ENCODE measurements at regions of chr1 and their contacts with region 1.

Region 1: DNA sequence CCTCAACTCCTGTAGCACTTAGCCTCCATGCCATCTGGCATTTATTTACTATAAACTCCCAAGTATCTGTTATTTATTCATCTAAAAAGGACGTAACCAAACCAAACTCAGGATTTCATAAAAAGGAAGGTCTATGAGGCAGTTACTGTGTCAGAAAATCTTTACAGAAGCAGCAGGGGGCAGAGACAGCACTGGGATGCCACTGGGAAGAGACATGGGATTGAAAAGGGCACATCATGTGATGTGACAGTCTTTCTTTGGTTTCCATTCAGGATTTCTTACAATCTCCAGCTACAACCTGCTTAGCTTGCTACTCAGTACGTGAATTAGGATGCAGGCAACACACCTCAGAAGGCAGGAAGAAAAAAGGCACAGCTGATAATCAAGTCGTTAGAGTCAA is 31.2 kb downstream of the SPRTN start:
- DNase-seq: peak in 1 of 10 donors; percentile 24
- H3K4me3 ChIP-seq: no peak overlapping the region
- H3K27ac ChIP-seq: peak overlapping the region in 25 of 59 donors; percentile 1 to 72 (median 43)
- H3K27me3 ChIP-seq: no peaks in the 10 kb centered on the region
- CTCF ChIP-seq: peak in 52 of 56 donors; percentile 1 to 77 (median 50)

Region 2: DNA sequence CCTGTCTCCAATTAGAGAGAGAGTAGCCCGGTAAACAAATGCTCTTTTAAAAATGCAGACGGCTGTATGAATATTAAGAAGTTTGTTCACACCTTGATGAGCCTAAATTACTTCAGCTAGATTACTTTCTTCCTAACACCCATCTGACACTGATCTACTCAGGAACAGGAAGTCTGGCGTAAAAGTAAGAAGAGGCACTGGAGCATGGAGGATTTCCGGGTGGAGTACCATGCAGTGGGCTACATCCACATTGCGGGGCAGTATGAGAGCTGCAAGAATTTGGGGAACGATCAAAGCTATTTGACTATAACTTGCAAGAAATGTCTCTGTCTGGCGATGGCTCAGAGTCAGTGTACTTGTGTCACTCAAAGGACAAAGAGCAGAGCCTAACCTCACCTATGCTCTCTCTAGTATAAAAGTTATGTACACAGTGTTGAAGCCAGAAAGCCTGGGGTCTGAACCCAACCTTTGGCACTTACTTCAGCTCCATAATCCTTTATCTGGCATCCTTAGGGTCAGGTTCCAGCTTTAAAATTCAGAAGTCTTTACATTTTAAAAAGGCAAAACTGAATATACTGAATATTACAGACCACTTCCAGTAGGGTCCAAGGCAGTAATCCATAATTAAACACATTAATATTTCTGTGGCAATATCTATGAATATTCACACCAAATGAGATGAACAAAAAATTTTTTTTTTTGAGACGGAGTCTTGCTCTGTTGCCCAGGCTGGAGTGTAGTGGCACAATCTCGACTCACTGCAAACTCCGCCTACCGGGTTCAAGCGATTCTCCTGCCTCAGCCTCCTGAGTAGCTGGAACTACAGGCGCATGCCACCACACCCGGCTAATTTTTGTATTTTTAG is 136.2 kb before region 1 on chr1:
- intact Hi-C with region 1: no loop called
- DNase-seq: no peak
- H3K4me3 ChIP-seq: no peak overlapping the region
- H3K27ac ChIP-seq: no peak overlapping the region
- H3K27me3 ChIP-seq: no peaks in the 10 kb centered on the region
- CTCF ChIP-seq: no peak

Region 3: GRCh38 chr1:231315887-231316286 is 53.4 kb before region 1 on chr1:
- intact Hi-C with region 1: no loop called
- DNase-seq: no peak
- H3K4me3 ChIP-seq: no peak overlapping the region
- H3K27ac ChIP-seq: no peak overlapping the region
- H3K27me3 ChIP-seq: no peaks in the 10 kb centered on the region
- CTCF ChIP-seq: peak in 30 of 56 donors; percentile 10 to 40 (median 24)

Region 4: DNA sequence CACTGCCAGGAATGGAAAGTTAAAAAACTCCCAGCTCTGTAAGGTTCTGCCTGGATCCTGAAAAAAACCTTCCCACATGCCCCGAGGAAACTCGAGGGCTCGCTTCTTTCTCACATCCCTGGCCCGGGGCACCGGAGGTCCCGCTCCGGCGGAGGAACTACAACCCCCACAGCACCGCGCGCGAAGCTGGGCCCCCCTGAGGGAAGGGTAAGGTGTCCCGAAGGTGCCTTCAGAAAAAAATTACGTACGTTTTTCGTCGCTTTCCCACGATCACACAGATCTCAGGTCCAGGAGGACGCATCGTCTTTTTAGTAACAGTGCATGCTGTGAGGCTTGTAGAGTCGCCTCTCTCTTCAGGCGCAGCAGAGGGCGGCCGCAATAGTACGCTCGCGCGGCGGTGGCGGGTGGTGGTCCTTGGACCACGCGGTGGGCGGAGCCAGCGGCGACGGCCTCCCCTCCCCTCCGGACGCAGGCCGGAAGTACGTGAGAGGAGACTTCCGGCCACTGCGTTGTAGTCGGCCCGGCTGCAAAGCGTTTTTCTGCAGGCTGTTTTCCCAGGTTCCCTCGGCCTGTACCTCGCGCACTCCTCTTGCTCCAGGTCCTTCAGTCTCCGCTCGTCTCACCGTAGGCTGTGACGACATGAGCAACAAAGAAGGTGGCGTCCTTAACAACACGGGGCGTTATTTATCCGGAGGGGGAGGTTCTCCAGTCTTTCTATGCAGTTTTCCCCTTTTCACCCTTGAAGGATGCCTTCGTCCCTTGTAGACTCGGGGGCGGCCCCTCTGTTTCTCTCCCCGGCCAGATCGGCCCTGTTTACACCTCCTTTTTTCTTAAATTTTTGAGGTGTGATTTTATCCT is 159.1 kb after region 1 on chr1 and contains the start of gene TSNAX:
- intact Hi-C with region 1: loop called in 1 of 2 experiments (anchors 5 kb)
- DNase-seq: peak; percentile 81 to 93 (median 88)
- H3K4me3 ChIP-seq: peak within 1 kb of the TSS; percentile 69 to 99 (median 89)
- H3K27ac ChIP-seq: peak within 1 kb of the TSS; percentile 80 to 99 (median 94)
- H3K27me3 ChIP-seq: no peaks in the 10 kb centered on the region
- CTCF ChIP-seq: peak in 26 of 56 donors; percentile 6 to 50 (median 26)
- total RNA-seq, gene TSNAX: 23.6 to 70.4 (median 49.5) TPM

Region 5: GRCh38 chr1:231590453-231591198 is 221.3 kb after region 1 on chr1:
- intact Hi-C with region 1: loop called in 1 of 2 experiments (anchors 5 kb)
- DNase-seq: peak in 7 of 10 donors; percentile 17 to 59 (median 54)
- H3K4me3 ChIP-seq: no peak overlapping the region
- H3K27ac ChIP-seq: no peak overlapping the region
- H3K27me3 ChIP-seq: no peaks in the 10 kb centered on the region
- CTCF ChIP-seq: peak; percentile 46 to 85 (median 72)

Region 6: GRCh38 chr1:231691618-231692259 is 322.5 kb after region 1 on chr1:
- intact Hi-C with region 1: loop called (anchors 10 kb)
- DNase-seq: peak in 8 of 10 donors; percentile 34 to 68 (median 52)
- H3K4me3 ChIP-seq: no peak overlapping the region
- H3K27ac ChIP-seq: peak overlapping the region in 17 of 59 donors; percentile 7 to 59 (median 35)
- H3K27me3 ChIP-seq: no peaks in the 10 kb centered on the region
- CTCF ChIP-seq: peak in 55 of 56 donors; percentile 40 to 85 (median 68)